ENCODE measurements at regions of chr2 and their contacts with region 1.

Region 1: DNA sequence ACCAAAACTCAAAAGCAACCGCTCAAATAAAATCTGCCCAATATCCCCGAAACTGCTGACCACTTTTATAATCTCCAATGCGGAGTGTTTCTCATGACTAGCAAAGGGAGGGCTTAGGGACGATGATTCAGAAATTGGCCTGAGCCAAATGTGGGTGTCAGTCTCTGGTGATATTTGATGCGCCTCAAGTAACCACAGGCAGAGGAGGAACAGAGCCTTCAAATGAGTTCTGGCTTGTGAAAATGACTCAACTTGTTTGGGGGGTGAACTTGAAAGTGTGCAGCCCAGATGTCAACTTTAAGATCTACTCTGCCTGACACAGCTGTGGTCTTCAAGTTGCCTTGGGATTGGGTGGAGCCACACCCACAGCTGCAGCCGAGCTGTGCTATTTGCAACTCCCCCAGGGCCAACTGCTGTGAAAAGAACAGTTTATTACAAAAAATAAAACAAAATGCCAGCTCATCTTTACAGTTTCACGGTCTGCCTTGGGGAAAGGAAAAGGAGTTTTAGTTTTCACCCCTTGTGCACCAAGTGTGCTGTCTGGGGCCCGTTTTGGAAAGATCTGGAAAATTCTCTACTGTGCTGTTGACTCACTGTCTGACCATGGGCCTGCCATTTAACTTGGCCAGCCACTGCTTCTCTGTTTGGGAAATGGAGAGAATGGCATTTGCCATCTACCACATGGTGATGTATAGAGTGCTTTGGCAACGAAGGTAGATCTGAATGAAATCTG is 222.1 kb downstream of the MTX2 start:
- DNase-seq: peak; percentile 60
- H3K4me3 Mint-ChIP-seq: no peak overlapping the region
- H3K27ac Mint-ChIP-seq: peak overlapping the region; percentile 21
- H3K4me1 Mint-ChIP-seq: peaks cover 10% of the 10 kb centered on the region
- H3K27me3 Mint-ChIP-seq: peaks cover 52% of the 10 kb centered on the region

Region 2: DNA sequence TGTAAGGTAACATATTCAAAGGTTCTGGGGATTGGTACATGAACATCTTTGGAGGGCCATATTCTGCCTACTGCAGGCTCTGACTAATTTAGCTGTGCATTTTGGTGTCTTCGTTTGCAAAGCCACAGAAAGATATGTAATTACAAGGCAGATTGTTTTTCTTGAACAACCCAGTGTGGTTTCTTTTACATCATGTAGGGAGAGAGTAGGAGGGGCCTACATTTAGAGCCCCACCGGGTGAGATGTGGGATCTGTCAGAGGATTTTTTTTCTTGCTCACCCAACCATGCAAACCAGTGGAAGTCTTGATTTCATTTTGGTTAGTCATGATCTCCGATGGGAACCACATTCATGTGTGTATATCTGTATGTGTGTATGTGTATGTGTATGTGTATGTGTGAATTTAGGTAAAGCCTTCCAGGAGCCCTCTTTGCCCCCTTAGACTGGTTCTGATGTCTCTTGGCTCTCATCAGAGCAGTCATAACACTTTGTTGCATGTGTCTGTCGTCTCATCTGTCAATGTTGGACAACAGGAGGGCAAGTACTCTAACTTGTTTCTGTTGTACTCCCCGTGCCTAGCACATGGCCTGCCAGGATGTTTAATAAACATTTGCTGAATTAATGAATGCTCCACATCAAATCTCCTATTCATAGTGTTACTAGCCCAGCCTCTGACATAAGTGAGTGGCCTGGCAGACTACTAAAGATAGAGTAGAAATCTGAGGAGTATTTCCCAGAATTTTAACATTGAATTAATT is 17.8 kb after region 1 on chr2:
- intact Hi-C with region 1: loop called (anchors 1 kb)
- DNase-seq: no peak
- H3K4me3 Mint-ChIP-seq: no peak overlapping the region
- H3K27ac Mint-ChIP-seq: peak overlapping the region; percentile 52
- H3K4me1 Mint-ChIP-seq: peaks cover 3% of the 10 kb centered on the region
- H3K27me3 Mint-ChIP-seq: peaks cover 8% of the 10 kb centered on the region

Region 3: DNA sequence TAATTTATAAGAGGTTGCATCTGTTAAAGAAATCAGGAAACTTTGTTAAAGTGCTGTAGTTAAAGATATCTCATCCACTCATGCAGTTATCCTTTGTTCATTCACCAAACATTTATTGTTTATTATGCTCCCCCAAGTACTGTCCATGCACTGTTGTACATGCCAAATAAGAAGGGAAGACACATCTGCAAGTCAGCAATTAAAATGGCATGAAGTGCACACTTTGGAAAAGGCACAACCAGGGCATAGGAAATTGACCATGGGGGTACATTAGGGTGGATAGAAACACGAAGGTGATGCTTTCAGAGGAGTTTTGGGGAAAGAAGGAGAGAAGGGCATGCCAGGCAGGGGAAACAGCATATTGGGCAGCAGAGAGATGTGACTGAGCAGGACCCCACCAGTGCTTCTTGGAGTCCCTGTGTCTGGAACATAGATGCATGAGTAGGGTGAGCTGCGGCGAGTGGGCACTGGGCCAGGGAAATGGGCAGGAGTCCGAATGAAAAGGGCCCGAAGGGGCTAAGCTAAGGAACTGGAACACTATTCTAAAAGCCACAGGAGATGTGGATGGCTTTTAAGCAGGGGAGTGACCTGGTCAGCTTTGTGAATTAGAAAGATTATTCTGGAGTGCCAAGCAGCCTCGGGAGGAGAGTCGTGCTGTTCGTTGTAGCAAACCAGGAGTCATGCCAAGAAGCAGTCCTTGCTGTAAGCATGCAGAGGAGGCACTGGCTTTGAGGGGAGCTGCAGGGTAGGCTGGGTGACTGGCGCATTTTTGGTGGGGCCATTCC is 1217.5 kb after region 1 on chr2:
- intact Hi-C with region 1: no loop called
- DNase-seq: no peak
- H3K4me3 Mint-ChIP-seq: no peak overlapping the region
- H3K27ac Mint-ChIP-seq: no peak overlapping the region
- H3K4me1 Mint-ChIP-seq: no peaks in the 10 kb centered on the region
- H3K27me3 Mint-ChIP-seq: peaks cover 4% of the 10 kb centered on the region

Measured in activated CD4-positive, alpha-beta T cell treated with anti-CD3 and anti-CD28 coated beads, Interleukin-2, amount 10 ng/mL, durations not matched to agents 24 days and 14 days (primary cell).